GM12878 (cell line): ENCODE measurements at regions of chr7 and their contacts with region 1.

Region 1: GRCh38 chr7:116138202-116138801 is 72.0 kb upstream of the TES start:
- DNase-seq: no peak
- ATAC-seq: peak; percentile 99
- H3K4me3 ChIP-seq: no peak overlapping the region
- H3K27ac ChIP-seq: no peak overlapping the region
- H3K4me1 ChIP-seq: no peaks in the 10 kb centered on the region
- H3K27me3 ChIP-seq: no peaks in the 10 kb centered on the region
- CTCF ChIP-seq: peak; percentile 65 to 83 (median 71)
- EP300 ChIP-seq: no peak
- POLR2A ChIP-seq: no peak
- RAD21 ChIP-seq: peak; percentile 99

Region 2: DNA sequence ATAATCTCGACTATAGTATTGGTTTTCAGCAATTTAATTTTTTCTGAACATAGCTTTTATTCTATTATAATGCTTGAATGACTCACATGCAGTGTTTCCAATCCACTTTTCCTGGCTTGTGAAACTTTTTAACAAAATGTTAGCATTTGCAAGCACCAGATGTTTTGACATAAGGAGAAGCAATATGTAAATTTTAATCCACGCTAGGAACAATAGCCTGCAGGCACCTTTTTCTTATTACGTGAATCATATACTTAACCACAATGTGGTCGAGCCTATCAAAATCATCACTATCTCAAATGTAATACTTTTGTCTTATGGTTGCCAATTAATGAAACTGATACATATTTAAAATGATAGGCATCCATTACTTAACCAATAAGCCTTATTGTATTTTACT is 204.8 kb before region 1 on chr7:
- CTCF ChIA-PET with region 1: no interaction called
- POLR2A ChIA-PET with region 1: no interaction called
- RAD21 ChIA-PET with region 1: no interaction called
- SMC1A ChIA-PET with region 1: no interaction called
- in situ Hi-C with region 1: no loop called
- intact Hi-C with region 1: no loop called
- DNase-seq: no peak
- ATAC-seq: no peak
- H3K4me3 ChIP-seq: no peak overlapping the region
- H3K27ac ChIP-seq: no peak overlapping the region
- H3K4me1 ChIP-seq: no peaks in the 10 kb centered on the region
- H3K27me3 ChIP-seq: no peaks in the 10 kb centered on the region
- CTCF ChIP-seq: no peak
- EP300 ChIP-seq: no peak
- POLR2A ChIP-seq: no peak
- RAD21 ChIP-seq: no peak

Region 3: DNA sequence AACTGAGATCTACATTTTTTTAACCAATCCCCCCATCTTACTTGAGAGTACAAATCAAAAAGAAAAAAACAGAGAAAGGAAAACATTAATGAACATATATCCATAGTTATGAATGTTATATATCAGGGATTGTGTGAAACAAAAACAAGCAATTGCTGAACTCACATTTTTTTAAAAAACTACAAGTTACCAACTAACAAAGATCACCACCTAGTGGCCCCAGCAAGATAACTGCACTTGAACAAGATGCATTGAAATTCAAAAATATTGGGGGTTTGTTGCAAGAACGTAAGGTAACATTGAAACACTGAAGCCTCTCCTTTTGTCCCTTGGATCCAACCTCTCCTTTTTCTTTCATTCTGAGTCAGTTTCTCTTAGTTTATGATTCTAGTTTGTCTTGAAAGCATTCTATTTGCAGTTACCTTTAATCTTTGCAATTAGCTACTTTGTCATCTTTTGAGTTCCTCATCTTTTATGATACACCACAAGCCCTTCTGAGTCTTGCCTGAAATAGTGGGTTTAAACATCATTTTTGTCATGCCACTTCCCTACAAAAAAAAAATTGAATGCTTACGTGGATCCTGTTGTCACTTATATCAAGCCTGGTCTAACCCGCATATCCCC is 15.2 kb before region 1 on chr7:
- CTCF ChIA-PET with region 1: interaction called, 18 read pairs
- POLR2A ChIA-PET with region 1: no interaction called
- RAD21 ChIA-PET with region 1: no interaction called
- SMC1A ChIA-PET with region 1: interaction called, 5 read pairs
- in situ Hi-C with region 1: no loop called
- intact Hi-C with region 1: no loop called
- DNase-seq: no peak
- ATAC-seq: peak; percentile 49; the same call in 2 of the 3 replicates
- H3K4me3 ChIP-seq: no peak overlapping the region
- H3K27ac ChIP-seq: no peak overlapping the region
- H3K4me1 ChIP-seq: no peaks in the 10 kb centered on the region; the same call in 1 of the 2 replicates
- H3K27me3 ChIP-seq: no peaks in the 10 kb centered on the region
- CTCF ChIP-seq: peak; percentile 54 to 71 (median 63); a peak in 5 of 6 replicates
- EP300 ChIP-seq: no peak
- POLR2A ChIP-seq: no peak
- RAD21 ChIP-seq: peak; percentile 85

Region 4: DNA sequence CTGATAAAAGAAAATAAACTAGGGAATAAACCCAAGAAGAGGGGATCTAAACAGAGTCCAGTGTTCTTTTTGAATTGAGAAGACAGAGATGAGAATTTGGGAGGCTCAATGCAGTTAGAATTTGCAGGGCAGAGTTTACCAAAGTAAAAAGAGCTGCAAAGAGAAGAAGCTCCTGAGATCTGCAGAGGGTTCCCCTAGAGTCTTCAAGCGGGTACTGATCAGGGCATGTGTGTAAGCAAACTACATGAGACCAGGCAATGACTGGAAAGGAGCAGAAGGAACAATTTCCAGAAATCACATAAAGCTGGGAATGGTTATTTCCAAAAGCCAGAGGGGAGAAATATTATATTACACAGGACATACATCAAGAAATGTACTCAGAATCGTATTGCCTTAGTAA is 14.0 kb after region 1 on chr7:
- CTCF ChIA-PET with region 1: interaction called, 12 read pairs
- POLR2A ChIA-PET with region 1: interaction called, 3 read pairs
- RAD21 ChIA-PET with region 1: no interaction called
- SMC1A ChIA-PET with region 1: interaction called, 4 read pairs
- in situ Hi-C with region 1: no loop called
- intact Hi-C with region 1: no loop called
- DNase-seq: no peak
- ATAC-seq: peak; percentile 35; the same call in 1 of the 3 replicates
- H3K4me3 ChIP-seq: no peak overlapping the region; the same call in 1 of the 2 replicates
- H3K27ac ChIP-seq: no peak overlapping the region
- H3K4me1 ChIP-seq: peaks cover 21% of the 10 kb centered on the region
- H3K27me3 ChIP-seq: no peaks in the 10 kb centered on the region; a peak in 1 of 4 replicates
- CTCF ChIP-seq: no peak
- EP300 ChIP-seq: no peak
- POLR2A ChIP-seq: no peak
- RAD21 ChIP-seq: no peak

Region 5: DNA sequence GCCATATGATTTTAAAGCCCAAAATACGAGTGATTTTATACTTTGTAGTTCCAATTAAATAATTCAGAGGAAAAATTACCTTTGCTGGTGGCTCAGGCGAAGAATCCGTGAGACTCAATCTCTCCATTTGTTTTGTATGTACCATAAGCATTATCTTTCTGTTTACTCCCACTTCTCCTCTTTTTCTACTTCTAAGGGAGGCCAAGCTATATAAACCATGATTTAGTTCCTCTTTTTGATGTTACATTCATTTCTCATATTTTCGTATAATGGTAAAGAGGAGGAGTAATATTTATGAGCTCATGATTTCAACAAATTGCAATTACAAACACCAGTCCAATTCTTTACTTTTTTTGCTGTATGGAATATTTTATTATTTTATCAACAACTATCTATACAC is 21.4 kb after region 1 on chr7:
- CTCF ChIA-PET with region 1: interaction called, 12 read pairs
- POLR2A ChIA-PET with region 1: no interaction called
- RAD21 ChIA-PET with region 1: interaction called, 3 read pairs
- SMC1A ChIA-PET with region 1: interaction called, 7 read pairs
- in situ Hi-C with region 1: no loop called
- intact Hi-C with region 1: no loop called
- DNase-seq: no peak
- ATAC-seq: 0 out of 3 replicates have a peak, but pooled peaks have one; percentile 17
- H3K4me3 ChIP-seq: no peak overlapping the region
- H3K27ac ChIP-seq: no peak overlapping the region
- H3K4me1 ChIP-seq: peaks cover 33% of the 10 kb centered on the region
- H3K27me3 ChIP-seq: no peaks in the 10 kb centered on the region
- CTCF ChIP-seq: no peak
- EP300 ChIP-seq: no peak
- POLR2A ChIP-seq: no peak
- RAD21 ChIP-seq: no peak

Region 6: GRCh38 chr7:116173051-116174028 is 35.0 kb after region 1 on chr7:
- CTCF ChIA-PET with region 1: interaction called, 15 read pairs
- POLR2A ChIA-PET with region 1: no interaction called
- RAD21 ChIA-PET with region 1: interaction called, 9 read pairs
- SMC1A ChIA-PET with region 1: interaction called, 11 read pairs
- in situ Hi-C with region 1: no loop called
- intact Hi-C with region 1: loop called (anchors 2 kb)
- DNase-seq: no peak
- ATAC-seq: peak; percentile 74
- H3K4me3 ChIP-seq: no peak overlapping the region
- H3K27ac ChIP-seq: no peak overlapping the region
- H3K4me1 ChIP-seq: no peaks in the 10 kb centered on the region
- H3K27me3 ChIP-seq: no peaks in the 10 kb centered on the region
- CTCF ChIP-seq: peak; percentile 28 to 67 (median 31); a peak in 4 of 6 replicates
- EP300 ChIP-seq: no peak
- POLR2A ChIP-seq: no peak
- RAD21 ChIP-seq: peak; percentile 76

Region 7: DNA sequence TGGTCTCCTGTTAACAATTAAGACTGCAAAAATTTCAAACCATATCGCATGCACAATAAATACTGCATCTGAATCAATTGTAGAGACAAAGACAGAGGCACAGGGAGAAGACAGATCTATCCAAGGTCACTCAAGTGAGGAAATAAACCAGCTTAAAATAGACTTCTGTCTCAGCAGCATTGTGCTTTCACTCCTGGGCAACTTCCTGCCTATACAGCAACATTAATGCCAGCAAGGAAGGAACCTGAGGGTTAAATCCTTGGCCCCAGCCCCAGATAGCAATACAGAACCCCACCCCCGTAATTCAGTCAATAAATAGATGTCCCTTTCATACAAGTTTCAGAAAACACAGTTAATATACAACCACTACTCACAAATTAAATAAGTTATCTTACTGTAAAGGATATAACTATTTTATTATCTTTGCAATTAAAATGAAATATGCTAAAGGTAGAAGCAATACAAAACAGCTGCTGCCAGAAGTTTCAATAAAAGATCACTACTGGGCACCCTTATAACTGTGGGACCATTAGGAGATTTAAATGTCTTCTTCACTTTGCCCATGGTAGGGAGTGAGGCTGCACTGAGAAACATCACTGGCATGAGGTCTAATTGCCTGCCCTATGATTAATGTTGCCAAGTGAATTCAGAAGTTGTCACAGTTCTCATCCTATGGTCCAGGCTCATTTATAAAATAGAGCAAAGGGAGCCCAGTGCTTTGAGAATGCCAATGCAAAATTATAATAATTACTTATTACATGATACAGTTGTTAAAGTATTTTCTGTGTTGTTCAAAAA is 435.9 kb after region 1 on chr7:
- CTCF ChIA-PET with region 1: no interaction called
- POLR2A ChIA-PET with region 1: no interaction called
- RAD21 ChIA-PET with region 1: no interaction called
- SMC1A ChIA-PET with region 1: no interaction called
- in situ Hi-C with region 1: no loop called
- intact Hi-C with region 1: no loop called
- DNase-seq: no peak
- ATAC-seq: peak; percentile 17
- H3K4me3 ChIP-seq: no peak overlapping the region
- H3K27ac ChIP-seq: no peak overlapping the region
- H3K4me1 ChIP-seq: peaks cover 25% of the 10 kb centered on the region
- H3K27me3 ChIP-seq: no peaks in the 10 kb centered on the region
- CTCF ChIP-seq: no peak
- EP300 ChIP-seq: no peak
- POLR2A ChIP-seq: no peak
- RAD21 ChIP-seq: no peak

Region 8: DNA sequence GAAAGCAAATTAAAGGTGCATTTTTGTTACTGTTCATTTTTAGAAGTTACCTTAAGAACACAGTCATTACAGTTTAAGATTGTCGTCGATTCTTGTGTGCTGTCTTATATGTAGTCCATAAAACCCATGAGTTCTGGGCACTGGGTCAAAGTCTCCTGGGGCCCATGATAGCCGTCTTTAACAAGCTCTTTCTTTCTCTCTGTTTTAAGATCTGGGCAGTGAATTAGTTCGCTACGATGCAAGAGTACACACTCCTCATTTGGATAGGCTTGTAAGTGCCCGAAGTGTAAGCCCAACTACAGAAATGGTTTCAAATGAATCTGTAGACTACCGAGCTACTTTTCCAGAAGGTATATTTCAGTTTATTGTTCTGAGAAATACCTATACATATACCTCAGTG is 633.3 kb after region 1 on chr7:
- CTCF ChIA-PET with region 1: no interaction called
- POLR2A ChIA-PET with region 1: no interaction called
- RAD21 ChIA-PET with region 1: no interaction called
- SMC1A ChIA-PET with region 1: no interaction called
- in situ Hi-C with region 1: no loop called
- intact Hi-C with region 1: no loop called
- DNase-seq: no peak
- ATAC-seq: no peak
- H3K4me3 ChIP-seq: no peak overlapping the region
- H3K27ac ChIP-seq: no peak overlapping the region
- H3K4me1 ChIP-seq: no peaks in the 10 kb centered on the region
- H3K27me3 ChIP-seq: peaks cover 0 to 8% of the 10 kb centered on the region in 2 experiments; a peak in 2 of 4 replicates
- CTCF ChIP-seq: no peak
- EP300 ChIP-seq: no peak
- POLR2A ChIP-seq: no peak
- RAD21 ChIP-seq: no peak